ENCODE measurements at regions of chr11 and their contacts with region 1.

Region 1: DNA sequence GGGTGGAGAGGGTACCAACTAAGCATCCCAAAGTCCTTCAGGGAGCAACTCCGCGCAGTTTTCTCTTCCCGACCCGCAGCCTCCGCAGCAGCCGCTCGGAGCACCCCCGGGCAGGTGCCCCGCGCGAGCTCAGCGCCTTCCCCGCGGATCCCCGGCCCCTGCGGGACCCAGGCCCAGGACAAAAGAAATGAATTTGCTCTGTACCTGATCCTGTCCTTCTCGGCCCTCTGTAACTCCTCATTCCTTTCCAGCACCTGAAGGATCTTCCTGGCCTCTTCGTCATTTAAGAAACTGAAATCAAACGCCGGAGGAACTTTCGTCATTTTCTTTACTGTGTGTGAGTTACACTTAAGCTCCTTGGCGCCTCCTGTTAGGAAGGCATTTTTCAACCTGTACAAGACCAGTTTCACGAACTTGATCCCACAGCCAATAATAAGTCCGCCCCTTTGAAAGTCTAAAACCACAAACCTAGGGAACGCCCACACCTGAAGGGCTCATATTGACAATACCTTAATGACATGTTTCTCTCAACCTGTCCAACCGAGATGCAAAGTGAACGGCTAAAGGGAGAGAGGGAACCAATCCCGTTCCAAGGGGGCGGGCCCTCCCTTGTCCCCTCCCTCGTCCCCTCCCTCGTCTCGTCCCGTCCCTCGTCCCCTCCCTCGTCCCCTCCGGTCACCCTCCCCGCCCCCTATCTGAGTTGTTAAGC is at the start of gene EXPH5:
- DNase-seq: peak; percentile 99
- ATAC-seq: peak; percentile 97
- H3K4me3 ChIP-seq: peak within 1 kb of the TSS; percentile 78 to 86
- H3K27ac ChIP-seq: peak within 1 kb of the TSS; percentile 74
- H3K4me1 ChIP-seq: peaks cover 14 to 20% of the 10 kb centered on the region in 2 experiments
- H3K27me3 ChIP-seq: no peaks in the 10 kb centered on the region
- CTCF ChIP-seq: no peak
- POLR2A ChIP-seq: peak; percentile 70
- RAD21 ChIP-seq: peak; percentile 27; the same call in 1 of the 2 replicates
- total RNA-seq, gene EXPH5: 18.3 TPM

Region 2: DNA sequence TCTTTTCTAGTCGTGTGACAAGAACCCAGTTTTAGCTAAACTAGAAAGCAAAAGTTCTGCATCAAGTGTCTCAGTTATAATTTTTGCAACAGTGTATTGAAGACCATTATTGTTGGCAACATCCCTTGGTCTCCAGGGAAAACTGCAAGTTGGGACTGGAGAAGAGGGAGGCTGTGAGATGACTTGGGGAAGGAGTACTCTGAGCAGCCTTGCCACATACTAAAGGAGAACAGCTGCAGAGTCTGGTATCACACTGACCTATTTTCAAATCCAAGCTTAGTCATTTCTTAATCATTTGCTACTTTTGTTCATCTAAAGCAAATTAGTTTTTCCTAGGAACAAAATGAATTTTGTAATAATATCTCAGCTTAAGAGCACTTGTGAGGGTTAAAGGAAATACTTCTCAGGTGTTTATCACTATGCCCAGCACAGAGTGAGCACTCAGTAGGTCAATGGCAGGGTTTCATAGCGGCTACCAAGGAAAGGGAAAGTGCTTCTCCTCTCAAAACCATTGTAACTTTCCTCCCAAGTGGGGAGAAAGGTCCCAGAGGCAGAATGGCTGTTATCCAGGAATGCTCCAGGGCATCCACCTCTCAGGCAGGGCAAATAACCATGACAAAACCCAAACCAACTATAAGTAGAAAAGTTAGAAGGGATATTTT is 1075.7 kb after region 1 on chr11:
- CTCF ChIA-PET with region 1: no interaction called
- POLR2A ChIA-PET with region 1: no interaction called
- RAD21 ChIA-PET with region 1: no interaction called
- intact Hi-C with region 1: loop called (anchors 5 kb)
- DNase-seq: no peak
- ATAC-seq: no peak
- H3K4me3 ChIP-seq: no peak overlapping the region
- H3K27ac ChIP-seq: no peak overlapping the region
- H3K4me1 ChIP-seq: no peaks in the 10 kb centered on the region
- H3K27me3 ChIP-seq: no peaks in the 10 kb centered on the region
- CTCF ChIP-seq: no peak
- POLR2A ChIP-seq: no peak
- RAD21 ChIP-seq: no peak